Activated B cell treated with CpG ODN at 0.5 μM for 24 hours (primary cell): ENCODE measurements at regions of chr9 and their contacts with region 1.

Region 1: DNA sequence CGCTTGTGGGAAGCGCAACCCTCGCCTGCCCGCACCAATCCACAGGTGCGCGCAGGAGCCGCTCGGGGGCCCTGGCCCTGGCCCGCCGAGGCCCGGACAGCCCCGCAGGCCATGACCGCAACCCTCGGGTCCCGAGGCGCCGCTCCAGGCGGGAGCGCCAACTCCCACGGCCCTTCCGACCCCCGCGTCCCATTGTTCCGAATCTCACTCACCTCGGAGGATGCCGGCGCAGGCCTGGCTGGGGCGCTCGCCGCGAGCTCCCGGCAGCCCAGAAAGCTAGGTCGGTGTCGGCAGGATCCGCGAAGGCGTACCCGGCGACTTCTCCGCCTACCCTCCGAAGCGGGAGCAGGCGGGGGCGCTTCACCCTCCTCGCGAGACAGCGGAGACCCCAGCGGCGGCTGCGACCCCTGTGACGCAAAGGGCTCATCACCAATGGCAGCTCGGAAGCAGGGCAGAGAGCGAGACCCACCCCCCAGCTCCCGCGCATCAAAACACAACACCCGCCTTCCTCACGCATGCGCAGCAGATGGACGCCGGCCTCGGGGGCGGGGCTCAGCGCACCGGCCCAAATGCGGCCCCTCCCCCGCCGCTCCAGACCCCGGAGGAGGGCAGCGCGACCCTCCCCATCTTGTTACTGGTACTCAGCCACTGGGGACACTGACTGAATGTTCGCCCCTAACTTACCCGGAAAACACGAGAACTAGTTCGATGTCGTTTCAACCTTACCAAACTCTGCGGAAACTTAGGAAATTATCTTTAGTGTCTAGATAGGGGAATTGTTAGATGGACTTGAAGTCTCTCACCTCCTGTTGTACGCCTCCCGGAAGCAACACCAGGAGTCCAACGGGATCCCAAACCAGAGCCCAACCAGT is 1.3 kb upstream of the SMIM27 start:
- DNase-seq: peak; percentile 91
- ATAC-seq: peak; percentile 80
- H3K4me3 Mint-ChIP-seq: peak overlapping the region; percentile 95
- H3K27ac Mint-ChIP-seq: peak overlapping the region; percentile 98
- H3K4me1 Mint-ChIP-seq: peaks cover 34% of the 10 kb centered on the region
- H3K27me3 Mint-ChIP-seq: no peaks in the 10 kb centered on the region
- CTCF ChIP-seq: no peak

Region 2: DNA sequence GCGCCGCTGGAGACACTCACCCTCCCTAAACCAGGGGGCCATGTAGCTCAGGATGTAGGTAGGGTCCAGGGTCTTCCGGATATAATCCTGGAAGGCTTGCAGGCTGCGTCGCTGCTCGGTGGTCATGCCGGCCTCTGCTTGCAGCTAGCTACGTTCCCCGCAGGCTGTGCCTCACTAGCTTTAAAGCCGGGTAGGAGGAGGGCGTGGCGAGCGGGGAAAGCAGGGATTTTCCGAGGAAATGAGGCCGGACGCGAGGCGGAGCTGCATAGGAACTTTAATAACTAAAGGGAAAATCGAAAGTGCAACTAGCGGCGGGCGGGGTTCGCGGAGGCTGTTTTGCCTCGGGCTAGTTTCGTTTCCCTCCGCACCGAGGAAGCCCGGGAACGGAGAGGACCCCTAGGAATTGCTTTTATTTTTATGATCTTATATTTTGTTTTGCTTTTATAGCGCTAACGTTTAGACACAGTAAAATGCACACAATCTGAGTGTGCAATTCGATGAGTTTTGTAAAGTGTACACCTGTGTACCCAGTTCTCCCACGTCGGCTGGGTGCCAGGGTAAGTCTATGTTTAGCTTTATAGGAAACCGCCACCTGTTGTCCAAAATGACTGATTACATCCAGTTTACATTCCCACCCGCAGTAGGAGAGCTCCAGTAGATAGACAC is 24.6 kb before region 1 on chr9 and contains the start of gene RIGI:
- CTCF ChIA-PET with region 1: interaction called, 3 read pairs
- POLR2A ChIA-PET with region 1: interaction called, 40 read pairs
- intact Hi-C with region 1: loop called (anchors 1 kb)
- DNase-seq: peak; percentile 59
- ATAC-seq: peak; percentile 69
- H3K4me3 Mint-ChIP-seq: peak within 1 kb of the TSS; percentile 98
- H3K27ac Mint-ChIP-seq: peak within 1 kb of the TSS; percentile 94
- H3K4me1 Mint-ChIP-seq: peaks cover 55% of the 10 kb centered on the region
- H3K27me3 Mint-ChIP-seq: no peaks in the 10 kb centered on the region
- CTCF ChIP-seq: no peak
- total RNA-seq, gene RIGI: 11.3 and 12.3 TPM in 2 replicates

Region 3: DNA sequence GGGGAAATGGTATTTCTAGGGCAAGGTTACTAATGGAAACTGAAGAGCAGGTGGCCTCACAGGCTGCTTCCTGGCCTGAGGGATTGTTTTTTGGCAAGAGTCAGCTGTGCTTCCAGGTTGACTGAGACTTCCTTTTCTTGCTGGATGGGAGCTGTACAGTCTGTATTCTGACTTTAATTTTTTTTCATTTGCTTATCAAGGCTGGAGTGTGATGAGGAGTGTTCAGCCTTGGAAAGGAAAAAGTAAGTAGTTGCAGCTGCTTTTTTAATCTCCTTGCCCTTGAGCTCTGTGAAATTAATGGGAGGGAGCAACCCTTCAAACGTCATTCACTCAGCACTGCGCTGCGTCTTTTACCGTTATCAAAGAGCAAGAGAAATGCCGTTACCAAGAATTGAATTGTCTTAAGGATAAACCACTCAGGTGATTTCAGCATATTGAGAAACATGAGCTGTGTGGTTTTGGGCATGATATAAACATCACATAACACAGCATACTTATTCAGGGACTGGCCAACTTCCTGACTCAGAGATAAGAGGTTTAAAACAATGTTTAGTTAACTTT is 803.9 kb after region 1 on chr9:
- CTCF ChIA-PET with region 1: no interaction called
- POLR2A ChIA-PET with region 1: no interaction called
- intact Hi-C with region 1: no loop called
- DNase-seq: no peak
- ATAC-seq: no peak
- H3K4me3 Mint-ChIP-seq: no peak overlapping the region
- H3K27ac Mint-ChIP-seq: peak overlapping the region; percentile 50
- H3K4me1 Mint-ChIP-seq: no peaks in the 10 kb centered on the region
- H3K27me3 Mint-ChIP-seq: no peaks in the 10 kb centered on the region
- CTCF ChIP-seq: no peak

Region 4: GRCh38 chr9:33473643-33474352 is 923.0 kb after region 1 on chr9 and contains the start of gene NOL6:
- CTCF ChIA-PET with region 1: no interaction called
- POLR2A ChIA-PET with region 1: no interaction called
- intact Hi-C with region 1: loop called (anchors 10 kb)
- DNase-seq: peak; percentile 93
- ATAC-seq: peak; percentile 99
- H3K4me3 Mint-ChIP-seq: peak within 1 kb of the TSS; percentile 99
- H3K27ac Mint-ChIP-seq: peak within 1 kb of the TSS; percentile 94
- H3K4me1 Mint-ChIP-seq: peaks cover 28% of the 10 kb centered on the region
- H3K27me3 Mint-ChIP-seq: no peaks in the 10 kb centered on the region
- CTCF ChIP-seq: no peak
- total RNA-seq, gene NOL6: 59.9 and 60.1 TPM in 2 replicates